ENCODE measurements at regions of chr17 and their contacts with region 1.

Region 1: DNA sequence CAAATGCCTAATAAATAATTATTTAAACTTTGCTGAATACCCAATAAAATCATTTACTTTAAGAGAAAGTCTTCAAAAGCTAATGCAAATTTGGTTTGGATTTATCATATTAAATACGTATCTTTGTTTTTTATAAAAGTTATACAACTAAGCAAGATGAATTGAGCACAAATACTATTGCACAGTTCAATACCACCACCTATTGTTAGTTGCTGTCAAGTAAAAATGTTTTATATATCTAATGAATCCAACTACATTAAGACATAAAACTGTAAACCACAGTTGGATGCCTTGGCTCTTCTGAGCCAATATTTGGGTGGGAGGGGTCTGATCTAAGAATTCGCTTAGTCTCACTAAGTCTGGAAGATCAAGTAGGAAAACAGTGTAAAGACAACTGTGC is 7.7 kb downstream of the FBXL20 start:
- DNase-seq: peak in 1 of 3 donors; percentile 19
- H3K4me3 ChIP-seq: no peak overlapping the region
- H3K4me3 Mint-ChIP-seq: no peak overlapping the region
- H3K27ac ChIP-seq: no peak overlapping the region
- H3K27ac Mint-ChIP-seq: no peak overlapping the region
- H3K4me1 ChIP-seq: no peaks in the 10 kb centered on the region
- H3K4me1 Mint-ChIP-seq: no peaks in the 10 kb centered on the region
- H3K27me3 ChIP-seq: no peaks in the 10 kb centered on the region
- H3K27me3 Mint-ChIP-seq: no peaks in the 10 kb centered on the region
- CTCF ChIP-seq: peak; percentile 24

Region 2: GRCh38 chr17:39235555-39236449 is 157.9 kb before region 1 on chr17:
- intact Hi-C with region 1: no loop called
- DNase-seq: peak; percentile 18 to 38 (median 37)
- H3K4me3 ChIP-seq: no peak overlapping the region
- H3K4me3 Mint-ChIP-seq: no peak overlapping the region
- H3K27ac ChIP-seq: no peak overlapping the region
- H3K27ac Mint-ChIP-seq: no peak overlapping the region
- H3K4me1 ChIP-seq: peaks cover 16 to 22% of the 10 kb centered on the region in 2 donors
- H3K4me1 Mint-ChIP-seq: peaks cover 32% of the 10 kb centered on the region
- H3K27me3 ChIP-seq: peaks cover 0 to 25% of the 10 kb centered on the region in 2 donors
- H3K27me3 Mint-ChIP-seq: peaks cover 11 to 37% (median 24%) of the 10 kb centered on the region in 3 donors
- CTCF ChIP-seq: peak; percentile 78

Region 3: GRCh38 chr17:39281806-39282205 is 111.9 kb before region 1 on chr17:
- intact Hi-C with region 1: loop called in 1 of 2 experiments (anchors 10 kb)
- DNase-seq: no peak
- H3K4me3 ChIP-seq: no peak overlapping the region
- H3K4me3 Mint-ChIP-seq: no peak overlapping the region
- H3K27ac ChIP-seq: no peak overlapping the region
- H3K27ac Mint-ChIP-seq: no peak overlapping the region
- H3K4me1 ChIP-seq: no peaks in the 10 kb centered on the region
- H3K4me1 Mint-ChIP-seq: no peaks in the 10 kb centered on the region
- H3K27me3 ChIP-seq: no peaks in the 10 kb centered on the region
- H3K27me3 Mint-ChIP-seq: no peaks in the 10 kb centered on the region
- CTCF ChIP-seq: no peak